ENCODE measurements at regions of chr3 and their contacts with region 1.

Region 1: GRCh38 chr3:117019082-117019713 is 309.6 kb downstream of the TUSC7 start:
- DNase-seq: peak in 9 of 10 donors; percentile 31 to 88 (median 71)
- H3K4me3 ChIP-seq: peak overlapping the region in 36 of 59 donors; percentile 4 to 51 (median 32)
- H3K27ac ChIP-seq: peak overlapping the region in 49 of 59 donors; percentile 13 to 79 (median 54)
- H3K27me3 ChIP-seq: no peaks in the 10 kb centered on the region
- CTCF ChIP-seq: peak; percentile 71 to 94 (median 87)

Region 2: GRCh38 chr3:115478359-115478758 is 1540.8 kb before region 1 on chr3:
- intact Hi-C with region 1: no loop called
- DNase-seq: no peak
- H3K4me3 ChIP-seq: no peak overlapping the region
- H3K27ac ChIP-seq: no peak overlapping the region
- H3K27me3 ChIP-seq: no peaks in the 10 kb centered on the region
- CTCF ChIP-seq: no peak

Region 3: GRCh38 chr3:116734243-116734642 is 285.0 kb before region 1 on chr3:
- intact Hi-C with region 1: no loop called
- DNase-seq: no peak
- H3K4me3 ChIP-seq: no peak overlapping the region
- H3K27ac ChIP-seq: no peak overlapping the region
- H3K27me3 ChIP-seq: no peaks in the 10 kb centered on the region
- CTCF ChIP-seq: no peak

Region 4: GRCh38 chr3:116863822-116864589 is 155.2 kb before region 1 on chr3:
- intact Hi-C with region 1: loop called in 1 of 2 experiments (anchors 10 kb)
- DNase-seq: peak in 4 of 10 donors; percentile 4 to 40 (median 33)
- H3K4me3 ChIP-seq: peak overlapping the region; percentile 17 to 72 (median 52)
- H3K27ac ChIP-seq: peak overlapping the region in 15 of 59 donors; percentile 2 to 75 (median 34)
- H3K27me3 ChIP-seq: no peaks in the 10 kb centered on the region
- CTCF ChIP-seq: peak; percentile 40 to 81 (median 64)

Region 5: DNA sequence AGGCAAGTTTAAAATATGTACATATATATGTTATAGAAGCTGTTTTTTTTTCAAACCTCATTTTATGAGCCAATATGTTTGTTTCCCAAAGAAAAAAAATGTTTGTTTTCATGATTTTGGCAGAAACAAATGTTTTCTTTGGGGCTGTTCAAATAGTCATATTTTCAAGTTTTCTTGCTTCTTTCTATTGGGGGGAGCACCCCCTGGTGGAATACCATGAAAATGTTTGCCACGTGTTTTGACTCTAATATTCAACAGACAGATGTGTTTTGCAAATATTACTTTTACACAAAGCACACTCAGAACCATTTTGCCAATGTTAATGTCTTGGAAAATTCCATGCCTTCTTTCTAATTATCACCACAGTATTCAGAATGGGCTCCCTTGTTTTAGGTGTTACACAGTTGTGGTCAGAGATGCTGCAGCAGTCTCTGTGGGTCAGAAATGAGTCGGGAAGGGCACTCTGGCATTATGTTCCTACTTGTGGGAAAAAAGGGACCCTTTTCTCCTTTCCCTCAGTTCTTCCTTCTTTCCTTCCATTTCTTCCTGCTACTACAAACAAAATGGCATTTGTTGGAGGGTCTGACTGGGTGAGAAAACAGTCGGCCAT is 507.4 kb after region 1 on chr3:
- intact Hi-C with region 1: loop called in 1 of 2 experiments (anchors 5 kb)
- DNase-seq: peak in 2 of 10 donors; percentile 49 to 75
- H3K4me3 ChIP-seq: no peak overlapping the region
- H3K27ac ChIP-seq: peak overlapping the region in 20 of 59 donors; percentile 2 to 59 (median 28)
- H3K27me3 ChIP-seq: no peaks in the 10 kb centered on the region
- CTCF ChIP-seq: peak; percentile 58 to 91 (median 79)

Region 6: DNA sequence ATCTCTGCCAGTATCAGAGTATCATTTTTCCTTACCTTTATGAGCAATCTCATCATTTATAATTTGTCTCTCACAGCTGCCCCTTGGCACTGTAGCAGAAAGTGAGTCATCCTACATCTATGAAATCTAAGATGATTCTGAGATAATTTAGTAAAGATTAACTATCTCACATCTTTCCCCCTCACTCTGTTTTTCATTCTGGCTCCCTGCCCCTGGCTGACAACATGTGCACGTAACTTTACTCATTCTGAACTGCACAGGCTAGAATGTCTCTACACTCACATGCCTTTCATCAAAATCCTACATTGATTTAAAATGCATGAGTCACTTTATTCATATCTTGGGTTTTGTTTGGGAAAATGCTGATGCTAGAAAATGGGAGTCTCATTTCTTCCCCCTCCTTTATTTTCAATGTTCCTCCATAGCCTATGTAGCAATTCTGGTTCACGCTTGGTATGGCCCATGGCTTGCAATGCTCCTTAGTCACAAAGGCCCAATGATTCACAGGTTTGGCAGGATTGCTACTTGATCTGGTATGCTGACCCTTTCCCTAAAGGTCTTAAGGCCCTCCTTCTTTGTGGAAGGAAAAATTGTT is 528.9 kb after region 1 on chr3:
- intact Hi-C with region 1: loop called in 1 of 2 experiments (anchors 5 kb)
- DNase-seq: no peak
- H3K4me3 ChIP-seq: no peak overlapping the region
- H3K27ac ChIP-seq: no peak overlapping the region
- H3K27me3 ChIP-seq: no peaks in the 10 kb centered on the region
- CTCF ChIP-seq: no peak

Region 7: GRCh38 chr3:117719316-117719926 is 700.2 kb after region 1 on chr3:
- intact Hi-C with region 1: loop called (anchors 10 kb)
- DNase-seq: no peak
- H3K4me3 ChIP-seq: no peak overlapping the region
- H3K27ac ChIP-seq: no peak overlapping the region
- H3K27me3 ChIP-seq: no peaks in the 10 kb centered on the region
- CTCF ChIP-seq: peak; percentile 61 to 90 (median 76)

Region 8: GRCh38 chr3:117997201-117998049 is 978.2 kb after region 1 on chr3:
- intact Hi-C with region 1: loop called (anchors 5 to 10 kb)
- DNase-seq: peak; percentile 54 to 91 (median 86)
- H3K4me3 ChIP-seq: peak overlapping the region; percentile 53 to 93 (median 77)
- H3K27ac ChIP-seq: peak overlapping the region in 58 of 59 donors; percentile 45 to 95 (median 85)
- H3K27me3 ChIP-seq: no peaks in the 10 kb centered on the region
- CTCF ChIP-seq: peak; percentile 68 to 96 (median 91)

Measured in dorsolateral prefrontal cortex (tissue), 120 donors.